H1 (cell line): ENCODE measurements at regions of chr1 and their contacts with region 1.

Region 1: GRCh38 chr1:29156543-29157268 is 25.0 kb downstream of the SRSF4 start:
- DNase-seq: no peak
- H3K4me3 ChIP-seq: no peak overlapping the region
- H3K27ac ChIP-seq: no peak overlapping the region
- H3K4me1 ChIP-seq: no peaks in the 10 kb centered on the region; a peak in 3 of 7 replicates
- H3K27me3 ChIP-seq: no peaks in the 10 kb centered on the region
- CTCF ChIP-seq: no peak
- EP300 ChIP-seq: no peak
- POLR2A ChIP-seq: no peak
- RAD21 ChIP-seq: no peak

Region 2: GRCh38 chr1:29171089-29171488 is 14.4 kb after region 1 on chr1:
- CTCF ChIA-PET with region 1: interaction called, 5 read pairs
- POLR2A ChIA-PET with region 1: interaction called, 16 read pairs
- DNase-seq: no peak
- H3K4me3 ChIP-seq: no peak overlapping the region
- H3K27ac ChIP-seq: no peak overlapping the region
- H3K4me1 ChIP-seq: peaks cover 3 to 8% (median 6%) of the 10 kb centered on the region in 4 experiments; a peak in 4 of 7 replicates
- H3K27me3 ChIP-seq: no peaks in the 10 kb centered on the region
- CTCF ChIP-seq: no peak
- EP300 ChIP-seq: no peak
- POLR2A ChIP-seq: no peak
- RAD21 ChIP-seq: no peak

Region 3: DNA sequence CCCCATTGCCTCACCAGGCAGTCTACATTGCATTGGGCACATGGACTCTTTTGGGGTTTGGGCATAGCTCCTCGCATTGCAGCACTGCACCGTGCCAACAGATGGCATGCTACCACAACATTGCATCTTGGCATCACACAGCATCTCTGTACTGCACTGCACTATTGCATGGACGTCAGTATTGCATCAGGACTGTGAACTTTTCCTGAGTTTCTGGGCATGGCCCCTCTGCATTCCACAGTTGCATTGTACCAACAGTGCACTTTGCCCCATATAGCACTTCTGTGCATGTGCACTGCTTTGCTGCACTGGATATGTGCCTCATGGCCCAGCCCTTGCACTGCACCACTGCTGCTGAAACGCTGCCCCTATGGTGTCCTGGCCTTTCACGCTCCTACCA is 89.2 kb after region 1 on chr1:
- CTCF ChIA-PET with region 1: no interaction called
- POLR2A ChIA-PET with region 1: no interaction called
- DNase-seq: no peak
- H3K4me3 ChIP-seq: no peak overlapping the region
- H3K27ac ChIP-seq: no peak overlapping the region
- H3K4me1 ChIP-seq: peaks cover 13 to 26% (median 20%) of the 10 kb centered on the region in 4 experiments
- H3K27me3 ChIP-seq: no peaks in the 10 kb centered on the region
- CTCF ChIP-seq: peak in 2 of 3 experiments; percentile 62 to 78; a peak in 3 of 4 replicates
- EP300 ChIP-seq: no peak
- POLR2A ChIP-seq: no peak
- RAD21 ChIP-seq: peak; percentile 79 to 82

Region 4: DNA sequence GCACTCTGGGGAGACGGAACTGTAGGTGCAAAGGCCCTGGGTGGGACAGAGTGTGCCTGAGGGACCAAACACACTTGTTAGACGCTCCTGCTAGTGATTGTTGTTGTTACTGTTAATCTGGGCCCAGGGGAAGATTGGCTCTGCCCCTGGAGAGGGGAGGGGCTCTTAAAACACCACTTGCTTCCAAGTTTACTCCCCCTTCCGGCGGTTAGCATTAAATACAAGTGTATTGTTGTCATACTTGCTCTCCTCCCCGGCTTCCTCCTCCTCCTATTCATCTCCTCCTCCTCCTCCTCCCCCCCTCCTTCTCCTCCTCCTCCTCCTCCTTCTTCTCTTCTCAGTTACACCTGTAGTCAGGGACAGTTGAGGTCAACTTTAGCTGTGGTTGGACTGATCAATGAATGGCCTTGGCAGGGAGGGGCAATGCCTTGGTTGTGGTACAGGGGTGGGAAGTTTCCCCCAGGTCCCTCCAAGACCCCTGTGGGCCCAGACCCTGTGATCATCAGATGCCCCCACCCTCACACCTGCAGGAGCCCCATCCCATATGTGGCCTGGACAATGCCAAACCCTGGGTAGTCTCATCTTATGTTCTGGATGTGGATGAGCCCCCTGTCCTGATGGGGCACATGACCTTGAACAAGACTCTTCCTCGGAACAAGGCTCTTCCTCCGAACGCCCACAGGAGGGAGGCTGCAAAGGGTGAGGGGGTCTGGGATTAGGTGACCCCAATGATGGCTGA is 297.0 kb after region 1 on chr1:
- CTCF ChIA-PET with region 1: no interaction called
- POLR2A ChIA-PET with region 1: no interaction called
- DNase-seq: peak; percentile 43 to 62
- H3K4me3 ChIP-seq: no peak overlapping the region
- H3K27ac ChIP-seq: no peak overlapping the region
- H3K4me1 ChIP-seq: peaks cover 0 to 11% (median 5%) of the 10 kb centered on the region in 4 experiments; a peak in 6 of 7 replicates
- H3K27me3 ChIP-seq: no peaks in the 10 kb centered on the region
- CTCF ChIP-seq: peak; percentile 5 to 66 (median 42)
- EP300 ChIP-seq: no peak
- POLR2A ChIP-seq: no peak
- RAD21 ChIP-seq: peak; percentile 30 to 43; a peak in 3 of 4 replicates